CD4-positive, alpha-beta memory T cell (primary cell): ENCODE measurements at regions of chr10 and their contacts with region 1.

Region 1: GRCh38 chr10:27241652-27242472 is 1.3 kb upstream of the ACBD5 start:
- DNase-seq: peak; percentile 85 to 88 (median 87)
- H3K4me3 ChIP-seq: peak overlapping the region; percentile 66 to 94
- H3K4me3 Mint-ChIP-seq: peak overlapping the region; percentile 95 to 99 (median 99)
- H3K27ac ChIP-seq: peak overlapping the region; percentile 89
- H3K27ac Mint-ChIP-seq: peak overlapping the region; percentile 98 to 100 (median 99)
- H3K4me1 ChIP-seq: peaks cover 36% of the 10 kb centered on the region
- H3K4me1 Mint-ChIP-seq: peaks cover 20 to 54% (median 31%) of the 10 kb centered on the region in 4 donors
- H3K27me3 ChIP-seq: no peaks in the 10 kb centered on the region
- H3K27me3 Mint-ChIP-seq: peaks cover 0 to 3% of the 10 kb centered on the region in 2 donors

Region 2: GRCh38 chr10:27099916-27100812 is 141.7 kb before region 1 on chr10 and contains the start of gene ANKRD26:
- CTCF ChIA-PET with region 1: no interaction called
- POLR2A ChIA-PET with region 1: interaction called, 6 read pairs
- intact Hi-C with region 1: loop called (anchors 2 kb)
- DNase-seq: peak; percentile 95 to 96 (median 95)
- H3K4me3 ChIP-seq: peak within 1 kb of the TSS; percentile 58 to 67
- H3K4me3 Mint-ChIP-seq: peak within 1 kb of the TSS; percentile 92 to 99 (median 96)
- H3K27ac ChIP-seq: peak within 1 kb of the TSS; percentile 76
- H3K27ac Mint-ChIP-seq: peak within 1 kb of the TSS; percentile 94 to 99 (median 98)
- H3K4me1 ChIP-seq: peaks cover 33% of the 10 kb centered on the region
- H3K4me1 Mint-ChIP-seq: peaks cover 21 to 49% (median 37%) of the 10 kb centered on the region in 4 donors
- H3K27me3 ChIP-seq: no peaks in the 10 kb centered on the region
- H3K27me3 Mint-ChIP-seq: no peaks in the 10 kb centered on the region
- total RNA-seq, gene ANKRD26: 10.7 to 11.6 TPM

Region 3: GRCh38 chr10:27252267-27253000 is 10.6 kb after region 1 on chr10:
- CTCF ChIA-PET with region 1: interaction called, 33 read pairs
- POLR2A ChIA-PET with region 1: interaction called, 113 read pairs
- intact Hi-C with region 1: loop called (anchors 1 kb)
- DNase-seq: peak; percentile 74 to 82 (median 78)
- H3K4me3 ChIP-seq: peak overlapping the region in 1 of 2 donors; percentile 47
- H3K4me3 Mint-ChIP-seq: peak overlapping the region; percentile 77 to 88 (median 81)
- H3K27ac ChIP-seq: peak overlapping the region; percentile 58
- H3K27ac Mint-ChIP-seq: peak overlapping the region; percentile 55 to 91 (median 85)
- H3K4me1 ChIP-seq: peaks cover 3% of the 10 kb centered on the region
- H3K4me1 Mint-ChIP-seq: peaks cover 5 to 10% (median 7%) of the 10 kb centered on the region in 4 donors
- H3K27me3 ChIP-seq: no peaks in the 10 kb centered on the region
- H3K27me3 Mint-ChIP-seq: no peaks in the 10 kb centered on the region

Region 4: GRCh38 chr10:27258838-27259812 is 17.3 kb after region 1 on chr10:
- CTCF ChIA-PET with region 1: interaction called, 18 read pairs
- POLR2A ChIA-PET with region 1: interaction called, 113 read pairs
- intact Hi-C with region 1: loop called (anchors 1 kb)
- DNase-seq: peak in 2 of 5 donors; percentile 11 to 23
- H3K4me3 ChIP-seq: peak overlapping the region; percentile 17 to 55
- H3K4me3 Mint-ChIP-seq: peak overlapping the region; percentile 83 to 98 (median 93)
- H3K27ac ChIP-seq: no peak overlapping the region
- H3K27ac Mint-ChIP-seq: peak overlapping the region; percentile 17 to 90 (median 63)
- H3K4me1 ChIP-seq: peaks cover 21% of the 10 kb centered on the region
- H3K4me1 Mint-ChIP-seq: peaks cover 19 to 29% (median 23%) of the 10 kb centered on the region in 4 donors
- H3K27me3 ChIP-seq: peaks cover 28% of the 10 kb centered on the region
- H3K27me3 Mint-ChIP-seq: peaks cover 22 to 28% of the 10 kb centered on the region in 2 donors

Region 5: DNA sequence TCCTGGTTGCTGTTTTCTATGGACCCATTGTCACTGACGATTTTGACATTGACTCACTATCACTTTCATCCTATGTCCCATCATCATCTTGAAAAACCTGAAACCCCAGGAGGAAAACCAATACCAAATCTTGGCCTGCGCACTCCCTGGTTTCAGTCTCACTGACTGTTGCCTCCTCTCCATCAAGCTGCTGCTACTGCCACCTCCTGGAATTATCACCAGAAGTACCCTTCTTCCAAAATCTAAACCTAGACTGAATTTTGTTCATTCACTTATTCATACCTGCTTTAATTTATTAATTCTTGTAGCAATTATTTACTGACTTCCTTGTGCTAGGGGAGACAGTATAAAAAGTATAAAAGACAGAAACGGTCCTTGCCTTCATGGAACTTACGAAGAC is 43.2 kb after region 1 on chr10:
- CTCF ChIA-PET with region 1: interaction called, 4 read pairs
- POLR2A ChIA-PET with region 1: interaction called, 3 read pairs
- intact Hi-C with region 1: loop called (anchors 5 kb)
- DNase-seq: peak; percentile 34 to 55 (median 37)
- H3K4me3 ChIP-seq: no peak overlapping the region
- H3K4me3 Mint-ChIP-seq: no peak overlapping the region
- H3K27ac ChIP-seq: no peak overlapping the region
- H3K27ac Mint-ChIP-seq: no peak overlapping the region
- H3K4me1 ChIP-seq: no peaks in the 10 kb centered on the region
- H3K4me1 Mint-ChIP-seq: peaks cover 0 to 4% (median 3%) of the 10 kb centered on the region in 4 donors
- H3K27me3 ChIP-seq: no peaks in the 10 kb centered on the region
- H3K27me3 Mint-ChIP-seq: no peaks in the 10 kb centered on the region

Region 6: DNA sequence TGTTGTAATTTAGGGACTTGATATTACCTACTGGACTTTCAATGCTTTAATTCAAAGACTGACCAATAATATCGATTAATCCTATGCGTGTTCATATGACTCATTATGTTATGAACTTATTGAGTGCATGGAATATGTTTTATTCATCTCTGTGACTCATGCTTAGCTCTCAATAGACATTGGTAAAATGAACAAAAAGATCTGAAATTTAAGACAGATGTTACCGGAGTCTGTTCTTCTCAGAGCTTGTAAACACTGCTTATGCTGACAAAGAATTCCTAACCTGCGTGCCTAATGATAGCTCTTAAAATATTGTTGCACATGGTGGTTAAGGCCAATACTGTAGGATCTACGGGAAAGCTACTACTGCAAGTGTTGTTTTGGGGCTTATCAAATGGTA is 130.2 kb after region 1 on chr10:
- CTCF ChIA-PET with region 1: no interaction called
- POLR2A ChIA-PET with region 1: no interaction called
- intact Hi-C with region 1: no loop called
- DNase-seq: no peak
- H3K4me3 ChIP-seq: no peak overlapping the region
- H3K4me3 Mint-ChIP-seq: no peak overlapping the region
- H3K27ac ChIP-seq: no peak overlapping the region
- H3K27ac Mint-ChIP-seq: no peak overlapping the region
- H3K4me1 ChIP-seq: no peaks in the 10 kb centered on the region
- H3K4me1 Mint-ChIP-seq: no peaks in the 10 kb centered on the region
- H3K27me3 ChIP-seq: no peaks in the 10 kb centered on the region
- H3K27me3 Mint-ChIP-seq: peaks cover 3 to 5% of the 10 kb centered on the region in 2 donors